Endothelial cell of umbilical vein (primary cell): ENCODE measurements at regions of chr10 and their contacts with region 1.

Region 1: DNA sequence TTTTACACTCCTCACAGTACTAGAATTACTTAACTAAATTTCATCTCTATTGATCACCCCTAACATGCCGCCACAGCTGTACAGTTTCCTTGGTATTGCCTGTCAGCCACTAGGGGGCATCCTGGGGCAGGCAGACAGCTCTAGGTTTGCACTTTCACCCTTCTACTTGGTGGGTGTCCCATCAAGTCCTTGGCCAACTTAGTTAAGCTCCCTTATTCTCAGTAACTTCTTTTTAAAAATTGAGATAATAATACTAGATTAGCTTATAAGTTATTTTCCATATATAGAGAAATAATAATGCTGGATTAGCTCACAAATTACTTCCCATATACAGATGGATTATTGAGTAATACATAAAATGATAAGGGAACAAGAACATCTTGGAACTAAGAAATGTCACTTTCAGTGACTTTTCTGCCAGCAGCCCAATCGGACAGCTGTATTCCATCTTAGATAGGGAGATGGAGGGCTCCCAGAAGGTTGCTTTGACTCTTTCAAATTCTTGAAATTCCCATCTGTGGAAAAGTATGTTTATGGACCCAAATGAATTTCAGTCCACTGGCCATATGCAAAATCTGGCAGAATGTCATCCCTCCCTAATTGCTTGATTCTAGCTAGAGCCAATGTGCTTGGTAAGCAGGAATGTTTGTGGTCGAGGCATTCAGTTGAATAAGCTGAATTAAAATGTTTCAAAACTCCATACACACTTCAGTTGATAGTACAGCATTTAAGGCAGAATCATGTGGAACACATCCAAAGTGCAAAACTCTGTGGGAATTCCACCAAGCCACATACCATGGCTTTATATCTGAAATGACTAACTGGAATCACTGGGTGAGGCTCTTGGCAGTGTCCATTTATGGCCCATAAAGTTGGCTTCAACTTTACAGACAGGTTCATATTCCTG is 309.7 kb downstream of the CSTF2T start:
- DNase-seq: peak; percentile 48
- H3K4me3 ChIP-seq: no peak overlapping the region
- H3K27ac ChIP-seq: no peak overlapping the region
- H3K4me1 ChIP-seq: no peaks in the 10 kb centered on the region
- H3K27me3 ChIP-seq: no peaks in the 10 kb centered on the region
- CTCF ChIP-seq: peak; percentile 79 to 85
- POLR2A ChIP-seq: no peak

Region 2: GRCh38 chr10:50464004-50464409 is 925.7 kb before region 1 on chr10:
- CTCF ChIA-PET with region 1: no interaction called
- POLR2A ChIA-PET with region 1: no interaction called
- dilution Hi-C with region 1: no loop called
- intact Hi-C with region 1: no loop called
- DNase-seq: no peak
- H3K4me3 ChIP-seq: no peak overlapping the region
- H3K27ac ChIP-seq: no peak overlapping the region
- H3K4me1 ChIP-seq: no peaks in the 10 kb centered on the region
- H3K27me3 ChIP-seq: no peaks in the 10 kb centered on the region
- CTCF ChIP-seq: no peak
- POLR2A ChIP-seq: no peak

Region 3: DNA sequence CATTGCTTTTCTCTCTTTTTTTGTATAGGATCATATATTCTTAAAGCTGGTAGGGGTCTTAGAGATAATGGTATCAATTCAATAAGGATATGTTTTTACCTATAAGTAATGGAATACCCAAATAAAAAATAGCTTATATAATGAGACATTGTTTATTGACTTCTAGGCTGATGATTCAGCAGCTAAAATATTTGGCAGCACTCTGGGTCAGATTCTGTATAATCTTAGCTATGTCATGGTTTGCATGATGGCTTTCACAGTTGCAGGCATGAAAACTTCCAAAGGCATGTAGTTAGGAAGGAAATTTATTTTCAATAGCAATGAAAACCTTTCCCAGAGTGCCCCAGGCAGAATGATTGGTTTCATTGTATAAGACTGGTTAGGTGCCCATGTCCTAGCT is 472.2 kb before region 1 on chr10:
- CTCF ChIA-PET with region 1: no interaction called
- POLR2A ChIA-PET with region 1: no interaction called
- dilution Hi-C with region 1: no loop called
- intact Hi-C with region 1: no loop called
- DNase-seq: no peak
- H3K4me3 ChIP-seq: no peak overlapping the region
- H3K27ac ChIP-seq: no peak overlapping the region
- H3K4me1 ChIP-seq: no peaks in the 10 kb centered on the region
- H3K27me3 ChIP-seq: no peaks in the 10 kb centered on the region
- CTCF ChIP-seq: no peak
- POLR2A ChIP-seq: no peak

Region 4: DNA sequence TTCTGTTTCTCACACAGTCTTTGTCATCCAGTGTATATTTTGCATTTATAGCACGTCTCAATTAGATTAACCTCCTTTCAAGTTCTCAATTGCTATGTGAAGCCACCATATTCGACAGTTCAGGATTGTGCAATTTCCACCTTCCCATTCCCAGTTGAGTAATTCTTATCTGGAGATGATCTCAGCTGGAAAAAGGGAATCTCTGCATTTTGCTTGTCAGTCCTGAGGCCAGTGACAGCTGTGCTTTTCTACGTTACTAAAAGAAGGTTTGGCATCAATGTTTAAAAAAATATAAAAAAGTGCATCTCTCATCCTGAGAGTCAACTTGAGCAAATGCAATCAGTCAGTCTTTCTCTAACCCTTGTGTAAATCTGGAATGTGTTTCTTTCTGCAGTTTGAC is 67.7 kb before region 1 on chr10:
- CTCF ChIA-PET with region 1: no interaction called
- POLR2A ChIA-PET with region 1: no interaction called
- dilution Hi-C with region 1: no loop called
- intact Hi-C with region 1: no loop called
- DNase-seq: no peak
- H3K4me3 ChIP-seq: no peak overlapping the region
- H3K27ac ChIP-seq: no peak overlapping the region
- H3K4me1 ChIP-seq: no peaks in the 10 kb centered on the region
- H3K27me3 ChIP-seq: peaks cover 0 to 2% of the 10 kb centered on the region in 2 experiments
- CTCF ChIP-seq: no peak
- POLR2A ChIP-seq: no peak

Region 5: GRCh38 chr10:51340845-51341610 is 48.6 kb before region 1 on chr10:
- CTCF ChIA-PET with region 1: no interaction called
- POLR2A ChIA-PET with region 1: no interaction called
- dilution Hi-C with region 1: no loop called
- intact Hi-C with region 1: no loop called
- DNase-seq: peak; percentile 60
- H3K4me3 ChIP-seq: no peak overlapping the region
- H3K27ac ChIP-seq: no peak overlapping the region
- H3K4me1 ChIP-seq: peaks cover 8% of the 10 kb centered on the region
- H3K27me3 ChIP-seq: no peaks in the 10 kb centered on the region
- CTCF ChIP-seq: no peak
- POLR2A ChIP-seq: no peak

Region 6: GRCh38 chr10:51422311-51423120 is 32.8 kb after region 1 on chr10:
- CTCF ChIA-PET with region 1: interaction called, 87 read pairs
- POLR2A ChIA-PET with region 1: no interaction called
- dilution Hi-C with region 1: no loop called
- intact Hi-C with region 1: loop called (anchors 1 kb)
- DNase-seq: peak; percentile 72
- H3K4me3 ChIP-seq: no peak overlapping the region
- H3K27ac ChIP-seq: no peak overlapping the region
- H3K4me1 ChIP-seq: peaks cover 6% of the 10 kb centered on the region
- H3K27me3 ChIP-seq: no peaks in the 10 kb centered on the region
- CTCF ChIP-seq: peak; percentile 62 to 70
- POLR2A ChIP-seq: no peak

Region 7: GRCh38 chr10:51427758-51428157 is 38.1 kb after region 1 on chr10:
- CTCF ChIA-PET with region 1: interaction called, 87 read pairs
- POLR2A ChIA-PET with region 1: no interaction called
- dilution Hi-C with region 1: no loop called
- intact Hi-C with region 1: loop called (anchors 1 kb)
- DNase-seq: no peak
- H3K4me3 ChIP-seq: no peak overlapping the region
- H3K27ac ChIP-seq: no peak overlapping the region
- H3K4me1 ChIP-seq: peaks cover 6% of the 10 kb centered on the region
- H3K27me3 ChIP-seq: peaks cover 2% of the 10 kb centered on the region in 2 experiments
- CTCF ChIP-seq: no peak
- POLR2A ChIP-seq: no peak

Region 8: GRCh38 chr10:51960494-51960895 is 570.8 kb after region 1 on chr10:
- CTCF ChIA-PET with region 1: interaction called, 39 read pairs
- POLR2A ChIA-PET with region 1: no interaction called
- dilution Hi-C with region 1: no loop called
- intact Hi-C with region 1: loop called (anchors 1 kb)
- DNase-seq: peak; percentile 52
- H3K4me3 ChIP-seq: no peak overlapping the region
- H3K27ac ChIP-seq: no peak overlapping the region
- H3K4me1 ChIP-seq: no peaks in the 10 kb centered on the region
- H3K27me3 ChIP-seq: no peaks in the 10 kb centered on the region
- CTCF ChIP-seq: peak; percentile 33 to 34
- POLR2A ChIP-seq: no peak

Region 9: GRCh38 chr10:52004342-52004949 is 614.8 kb after region 1 on chr10:
- CTCF ChIA-PET with region 1: interaction called, 23 read pairs
- POLR2A ChIA-PET with region 1: no interaction called
- dilution Hi-C with region 1: no loop called
- intact Hi-C with region 1: loop called (anchors 1 kb)
- DNase-seq: peak; percentile 62
- H3K4me3 ChIP-seq: no peak overlapping the region
- H3K27ac ChIP-seq: no peak overlapping the region
- H3K4me1 ChIP-seq: no peaks in the 10 kb centered on the region
- H3K27me3 ChIP-seq: peaks cover 3 to 14% of the 10 kb centered on the region in 2 experiments
- CTCF ChIP-seq: peak; percentile 28 to 45
- POLR2A ChIP-seq: no peak